Activated CD4-positive, alpha-beta T cell treated with anti-CD3 and anti-CD28 coated beads, Interleukin-2, amount 10 ng/mL, durations not matched to agents 24 days and 14 days (primary cell): ENCODE measurements at regions of chr11 and their contacts with region 1.

Region 1: DNA sequence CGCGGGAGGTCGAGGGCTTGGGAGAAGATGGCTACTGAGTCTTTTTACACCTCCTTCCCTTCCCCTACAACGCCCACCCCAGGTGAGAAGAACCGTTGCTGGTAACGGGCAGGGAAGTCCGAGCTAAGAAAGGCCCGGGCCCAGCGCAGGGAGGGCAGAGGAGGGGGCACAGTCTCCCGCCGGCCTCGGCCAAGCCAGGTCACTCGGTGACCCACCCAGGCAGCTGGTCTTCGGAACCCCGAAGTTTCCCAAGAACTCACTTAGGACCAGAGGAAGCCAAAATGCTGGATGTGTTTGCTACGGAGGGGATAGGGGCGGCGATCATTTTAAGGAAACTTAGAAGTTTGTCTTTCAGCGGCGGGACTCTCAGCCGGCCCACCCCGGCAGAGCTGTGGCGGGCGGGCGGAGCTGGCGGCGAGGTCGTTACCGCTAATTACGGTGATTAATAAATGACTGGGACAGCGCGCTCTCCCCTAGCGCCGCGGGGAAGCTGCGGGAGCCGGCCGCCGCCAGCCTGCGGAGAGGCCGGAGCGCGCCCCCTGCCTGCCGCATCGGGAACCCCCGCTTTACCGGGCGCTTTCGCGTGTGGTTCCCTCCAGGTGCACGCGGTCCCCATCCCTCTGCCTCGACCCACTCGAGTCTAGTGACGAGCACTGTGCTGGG is 820 bp downstream of the ROBO3 start:
- DNase-seq: peak; percentile 86
- H3K4me3 Mint-ChIP-seq: peak overlapping the region; percentile 11
- H3K27ac Mint-ChIP-seq: peak overlapping the region; percentile 23
- H3K4me1 Mint-ChIP-seq: peaks cover 8% of the 10 kb centered on the region
- H3K27me3 Mint-ChIP-seq: peaks cover 92% of the 10 kb centered on the region

Region 2: GRCh38 chr11:122981388-122982264 is 1884.4 kb before region 1 on chr11 and contains the start of gene BSX:
- intact Hi-C with region 1: loop called (anchors 5 kb)
- DNase-seq: peak; percentile 87
- H3K4me3 Mint-ChIP-seq: no peak within 1 kb of the TSS
- H3K27ac Mint-ChIP-seq: no peak within 1 kb of the TSS
- H3K4me1 Mint-ChIP-seq: peaks cover 25% of the 10 kb centered on the region
- H3K27me3 Mint-ChIP-seq: peaks cover 87% of the 10 kb centered on the region
- total RNA-seq, gene BSX: not detected in 2 replicates

Region 3: GRCh38 chr11:124800226-124800929 is 65.7 kb before region 1 on chr11 and contains the start of gene MSANTD2:
- intact Hi-C with region 1: loop called (anchors 2 kb)
- DNase-seq: peak; percentile 96
- H3K4me3 Mint-ChIP-seq: peak within 1 kb of the TSS; percentile 95
- H3K27ac Mint-ChIP-seq: peak within 1 kb of the TSS; percentile 90
- H3K4me1 Mint-ChIP-seq: peaks cover 21% of the 10 kb centered on the region
- H3K27me3 Mint-ChIP-seq: peaks cover 16% of the 10 kb centered on the region
- total RNA-seq, gene MSANTD2: 10.6 TPM in 2 replicates

Region 4: GRCh38 chr11:124837491-124837856 is 28.6 kb before region 1 on chr11:
- intact Hi-C with region 1: loop called (anchors 1 kb)
- DNase-seq: peak; percentile 64
- H3K4me3 Mint-ChIP-seq: no peak overlapping the region
- H3K27ac Mint-ChIP-seq: no peak overlapping the region
- H3K4me1 Mint-ChIP-seq: peaks cover 13% of the 10 kb centered on the region
- H3K27me3 Mint-ChIP-seq: peaks cover 74% of the 10 kb centered on the region

Region 5: DNA sequence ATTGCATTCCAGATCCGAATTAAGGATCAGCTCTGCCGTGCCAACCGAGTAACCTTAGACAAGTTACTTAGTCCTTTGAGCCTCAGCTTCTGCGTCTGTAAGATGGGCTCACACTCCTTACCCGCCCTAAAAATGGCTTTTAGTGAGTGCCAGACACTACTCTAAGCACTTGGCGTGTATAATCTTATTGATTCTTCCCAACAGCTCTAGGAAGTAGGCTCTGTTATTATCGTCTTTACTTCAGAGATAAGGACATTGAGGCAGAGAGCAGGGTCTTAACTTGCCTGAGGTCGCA is 22.5 kb before region 1 on chr11:
- intact Hi-C with region 1: loop called (anchors 1 kb)
- DNase-seq: no peak
- H3K4me3 Mint-ChIP-seq: no peak overlapping the region
- H3K27ac Mint-ChIP-seq: no peak overlapping the region
- H3K4me1 Mint-ChIP-seq: peaks cover 6% of the 10 kb centered on the region
- H3K27me3 Mint-ChIP-seq: peaks cover 90% of the 10 kb centered on the region

Region 6: DNA sequence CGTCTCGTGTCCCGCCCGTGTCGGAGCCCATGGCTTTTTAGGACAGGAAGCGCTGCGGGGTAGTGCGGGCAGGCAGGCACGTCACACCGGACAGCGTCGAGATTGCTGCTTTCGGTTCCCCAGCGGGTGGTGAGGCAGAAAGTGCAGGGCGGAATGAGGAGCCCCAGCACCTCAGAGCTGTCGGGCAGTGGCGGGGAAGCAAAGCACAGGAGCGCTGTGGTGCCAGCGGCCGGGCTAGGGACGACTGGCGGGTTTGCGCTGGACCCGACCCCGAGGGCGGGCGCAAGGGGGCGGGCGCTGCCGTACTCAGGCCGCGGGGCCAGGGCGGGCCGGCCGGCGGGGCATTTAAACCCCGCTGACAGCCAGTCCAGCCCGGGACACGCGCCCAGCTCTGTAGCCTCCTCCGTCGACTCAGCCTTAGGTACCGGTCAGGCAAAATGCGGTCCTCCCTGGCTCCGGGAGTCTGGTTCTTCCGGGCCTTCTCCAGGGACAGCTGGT is 196.9 kb after region 1 on chr11 and contains the start of gene SLC37A2:
- intact Hi-C with region 1: no loop called
- DNase-seq: peak; percentile 84
- H3K4me3 Mint-ChIP-seq: peak within 1 kb of the TSS; percentile 87
- H3K27ac Mint-ChIP-seq: no peak within 1 kb of the TSS
- H3K4me1 Mint-ChIP-seq: peaks cover 2% of the 10 kb centered on the region
- H3K27me3 Mint-ChIP-seq: peaks cover 65% of the 10 kb centered on the region
- total RNA-seq, gene SLC37A2: 0.07 TPM in 2 replicates

Region 7: DNA sequence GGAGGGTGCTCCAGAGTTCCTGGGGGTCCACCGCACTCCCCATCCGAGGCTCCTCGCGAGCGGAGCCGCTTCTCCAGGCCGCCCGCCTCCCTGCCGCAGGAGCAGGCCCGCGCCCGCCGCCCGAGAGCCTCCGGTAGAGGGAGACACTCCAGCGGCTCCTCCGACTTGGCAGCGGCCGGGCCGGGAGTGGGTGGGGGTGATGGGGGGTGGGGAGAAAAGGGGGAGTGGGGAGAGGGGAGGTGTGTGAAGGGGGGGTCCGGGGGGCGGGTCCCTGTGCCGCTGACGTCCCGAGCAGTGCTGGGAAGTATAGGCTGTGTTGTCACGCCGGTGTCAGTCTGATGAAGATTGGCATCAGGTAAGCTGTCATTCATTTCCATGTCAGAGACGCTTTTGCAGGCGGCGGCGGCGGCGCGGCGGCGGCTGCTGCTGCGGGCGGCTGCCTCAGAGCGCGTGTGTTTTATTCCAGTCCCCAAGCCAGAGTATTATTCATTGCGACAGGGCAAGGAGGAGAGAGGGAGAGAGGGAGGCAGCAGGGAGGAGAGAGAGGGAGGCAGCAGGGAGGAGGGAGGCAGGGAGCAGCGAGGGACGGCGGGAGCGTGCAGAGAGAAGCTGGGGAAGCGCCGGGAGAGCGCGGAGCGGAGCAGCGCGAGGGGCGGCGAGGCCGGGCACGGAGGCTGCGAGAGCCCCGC is 298.5 kb after region 1 on chr11 and contains the start of gene PKNOX2:
- intact Hi-C with region 1: loop called (anchors 2 kb)
- DNase-seq: peak; percentile 87
- H3K4me3 Mint-ChIP-seq: peak within 1 kb of the TSS; percentile 94
- H3K27ac Mint-ChIP-seq: peak within 1 kb of the TSS; percentile 62
- H3K4me1 Mint-ChIP-seq: peaks cover 19% of the 10 kb centered on the region
- H3K27me3 Mint-ChIP-seq: peaks cover 74% of the 10 kb centered on the region
- total RNA-seq, gene PKNOX2: not detected in 2 replicates